K562 (cell line): ENCODE measurements at regions of chr12 and their contacts with region 1.

Region 1: GRCh38 chr12:102879144-102879763 is 37.8 kb downstream of the PAH start:
- DNase-seq: peak; percentile 10 to 47 (median 16)
- ATAC-seq: peak; percentile 81
- H3K4me3 ChIP-seq: no peak overlapping the region
- H3K27ac ChIP-seq: no peak overlapping the region
- H3K4me1 ChIP-seq: no peaks in the 10 kb centered on the region
- H3K27me3 ChIP-seq: no peaks in the 10 kb centered on the region
- CTCF ChIP-seq: peak; percentile 52 to 65 (median 57)
- EP300 ChIP-seq: no peak
- POLR2A ChIP-seq: no peak
- RAD21 ChIP-seq: peak; percentile 55 to 70

Region 2: GRCh38 chr12:101919447-101919846 is 959.8 kb before region 1 on chr12:
- CTCF ChIA-PET with region 1: no interaction called
- POLR2A ChIA-PET with region 1: no interaction called
- in situ Hi-C with region 1: no loop called
- intact Hi-C with region 1: loop called (anchors 5 kb)
- DNase-seq: no peak
- ATAC-seq: no peak
- H3K4me3 ChIP-seq: no peak overlapping the region
- H3K27ac ChIP-seq: no peak overlapping the region
- H3K4me1 ChIP-seq: no peaks in the 10 kb centered on the region
- H3K27me3 ChIP-seq: no peaks in the 10 kb centered on the region
- CTCF ChIP-seq: no peak
- EP300 ChIP-seq: no peak
- POLR2A ChIP-seq: no peak
- RAD21 ChIP-seq: no peak

Region 3: DNA sequence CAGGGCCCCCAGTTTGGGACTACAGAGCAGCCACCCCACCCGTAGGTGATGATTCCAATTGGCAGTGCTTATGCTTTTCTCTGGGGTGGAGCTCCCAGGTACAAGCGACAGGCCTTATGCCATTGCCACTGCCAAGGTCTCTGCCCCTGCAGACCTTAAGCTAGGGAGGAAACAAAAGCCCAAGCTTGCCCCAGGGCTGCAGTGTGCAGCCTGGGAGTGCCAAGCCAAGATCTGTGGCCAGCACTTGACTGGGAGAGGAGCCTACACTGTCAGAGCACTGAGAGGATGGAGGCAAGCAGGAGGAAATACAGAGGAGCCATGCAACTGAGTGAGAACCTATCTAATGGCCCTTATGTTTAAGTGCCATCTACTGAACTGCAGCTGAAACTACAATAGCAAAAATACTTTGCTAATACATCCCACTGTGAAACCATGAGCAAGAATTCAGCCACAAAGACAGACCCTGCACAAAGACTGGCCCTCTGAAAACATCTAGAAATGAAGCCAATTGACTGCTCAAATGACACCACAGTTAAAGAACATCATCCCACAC is 60.5 kb after region 1 on chr12:
- CTCF ChIA-PET with region 1: interaction called, 10 read pairs
- POLR2A ChIA-PET with region 1: no interaction called
- in situ Hi-C with region 1: no loop called
- intact Hi-C with region 1: no loop called
- DNase-seq: no peak
- ATAC-seq: no peak
- H3K4me3 ChIP-seq: no peak overlapping the region
- H3K27ac ChIP-seq: no peak overlapping the region
- H3K4me1 ChIP-seq: no peaks in the 10 kb centered on the region
- H3K27me3 ChIP-seq: no peaks in the 10 kb centered on the region
- CTCF ChIP-seq: peak in 2 of 3 experiments; percentile 10 to 43; a peak in 2 of 6 replicates
- EP300 ChIP-seq: no peak
- POLR2A ChIP-seq: no peak
- RAD21 ChIP-seq: peak in 1 of 2 experiments; percentile 41; a peak in 2 of 4 replicates

Region 4: GRCh38 chr12:102948941-102949352 is 69.7 kb after region 1 on chr12:
- CTCF ChIA-PET with region 1: no interaction called
- POLR2A ChIA-PET with region 1: no interaction called
- in situ Hi-C with region 1: no loop called
- intact Hi-C with region 1: loop called (anchors 5 kb)
- DNase-seq: peak; percentile 45 to 56 (median 52)
- ATAC-seq: peak; percentile 60; the same call in 2 of the 3 replicates
- H3K4me3 ChIP-seq: no peak overlapping the region
- H3K27ac ChIP-seq: no peak overlapping the region
- H3K4me1 ChIP-seq: peaks cover 0 to 3% of the 10 kb centered on the region in 2 experiments; a peak in 1 of 5 replicates
- H3K27me3 ChIP-seq: no peaks in the 10 kb centered on the region
- CTCF ChIP-seq: peak; percentile 67 to 86 (median 77)
- EP300 ChIP-seq: no peak
- POLR2A ChIP-seq: no peak
- RAD21 ChIP-seq: peak; percentile 55 to 77

Region 5: DNA sequence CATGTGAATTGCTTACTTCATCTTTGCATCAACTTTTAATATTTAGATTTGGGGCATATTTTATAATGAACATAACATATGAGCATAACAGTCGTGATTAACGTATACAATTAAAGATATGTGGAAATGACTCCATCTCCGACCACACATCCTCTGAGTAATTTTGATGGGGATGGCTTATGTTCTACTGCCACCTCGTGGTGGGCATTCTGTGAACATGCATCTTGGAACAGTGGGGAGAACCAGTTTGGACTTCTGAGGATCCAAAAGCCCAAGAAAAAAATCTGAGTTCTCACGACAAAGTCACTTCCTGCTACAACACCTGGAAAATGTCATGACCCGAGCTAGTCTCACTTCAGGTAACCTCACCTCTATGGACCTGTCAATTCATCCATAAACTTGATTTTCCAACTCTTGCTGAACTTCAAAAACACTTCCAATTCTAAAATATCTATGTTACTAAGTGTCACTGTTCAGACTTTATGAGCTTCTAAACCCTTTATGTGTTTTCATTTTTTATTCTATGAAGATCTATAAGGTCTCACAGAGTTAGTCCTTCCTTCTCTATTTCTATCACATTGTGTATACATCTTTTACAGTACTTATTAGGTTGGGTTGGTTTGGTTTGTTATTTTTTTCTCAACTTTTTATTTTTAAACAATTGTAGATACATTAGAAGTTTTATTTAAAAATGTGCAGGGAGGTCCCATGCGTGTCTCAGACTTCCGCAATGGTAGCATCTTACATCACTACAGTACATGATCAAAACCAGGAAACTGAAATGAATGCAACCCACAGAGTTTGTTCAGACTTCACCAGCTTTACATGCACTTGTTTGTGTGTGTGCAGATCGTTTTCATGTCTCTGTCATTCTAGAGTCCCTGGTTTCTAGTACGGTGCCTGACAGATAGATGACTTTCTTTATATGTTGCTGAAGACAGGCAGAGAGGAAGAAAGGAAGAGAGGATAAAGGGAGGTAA is 669.7 kb after region 1 on chr12:
- CTCF ChIA-PET with region 1: interaction called, 8 read pairs
- POLR2A ChIA-PET with region 1: no interaction called
- in situ Hi-C with region 1: no loop called
- intact Hi-C with region 1: loop called (anchors 1 kb)
- DNase-seq: peak; percentile 62 to 76 (median 70)
- ATAC-seq: peak; percentile 92
- H3K4me3 ChIP-seq: no peak overlapping the region
- H3K27ac ChIP-seq: no peak overlapping the region
- H3K4me1 ChIP-seq: no peaks in the 10 kb centered on the region
- H3K27me3 ChIP-seq: no peaks in the 10 kb centered on the region
- CTCF ChIP-seq: peak; percentile 76 to 89 (median 78)
- EP300 ChIP-seq: no peak
- POLR2A ChIP-seq: no peak
- RAD21 ChIP-seq: peak; percentile 90 to 93

Region 6: DNA sequence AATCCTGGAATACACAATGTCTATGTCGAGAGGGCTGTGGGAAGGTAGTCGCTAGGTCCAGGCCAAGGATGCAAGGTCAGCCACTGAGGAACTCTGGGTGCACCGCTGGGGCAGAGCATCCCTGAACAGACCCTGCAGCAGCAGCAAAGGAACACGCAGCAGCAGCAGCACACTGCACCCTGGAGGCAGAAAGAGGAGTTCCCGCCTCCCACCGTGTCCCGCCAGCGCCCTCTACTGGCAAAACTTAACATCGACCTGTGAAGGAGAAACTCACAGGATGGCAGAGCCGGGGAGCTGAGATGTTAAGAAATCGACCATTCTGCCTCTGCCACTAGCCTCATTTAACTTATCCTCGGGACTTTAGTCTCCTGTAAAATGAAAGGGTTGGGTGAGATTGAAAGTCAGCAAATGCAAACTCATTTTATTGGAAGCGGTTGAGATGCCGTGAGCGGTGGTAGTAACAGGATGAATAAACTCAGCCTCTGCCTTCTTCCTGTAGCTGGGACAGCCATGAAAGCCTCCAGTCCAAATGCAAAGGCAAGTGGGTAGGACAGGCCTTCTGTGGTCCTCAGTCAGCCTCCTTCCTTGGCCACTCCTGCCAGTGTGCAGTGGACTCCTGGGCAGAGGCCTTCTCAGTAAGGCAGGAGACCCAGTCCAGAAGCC is 753.4 kb after region 1 on chr12:
- CTCF ChIA-PET with region 1: no interaction called
- POLR2A ChIA-PET with region 1: no interaction called
- in situ Hi-C with region 1: no loop called
- intact Hi-C with region 1: loop called (anchors 1 kb)
- DNase-seq: peak; percentile 84 to 89 (median 88)
- ATAC-seq: peak; percentile 99
- H3K4me3 ChIP-seq: no peak overlapping the region
- H3K27ac ChIP-seq: no peak overlapping the region
- H3K4me1 ChIP-seq: no peaks in the 10 kb centered on the region
- H3K27me3 ChIP-seq: peaks cover 0 to 7% of the 10 kb centered on the region in 2 experiments; a peak in 3 of 5 replicates
- CTCF ChIP-seq: peak; percentile 99 to 100 (median 100)
- EP300 ChIP-seq: no peak
- POLR2A ChIP-seq: no peak
- RAD21 ChIP-seq: peak; percentile 84 to 92